Activated CD4-positive, alpha-beta T cell treated with anti-CD3 and anti-CD28 coated beads for 36 hours (primary cell): ENCODE measurements at regions of chr20 and their contacts with region 1.

Region 1: GRCh38 chr20:21702553-21703470 is 2.7 kb upstream of the PAX1 start:
- DNase-seq: peak; percentile 80
- ATAC-seq: peak; percentile 55
- H3K4me3 Mint-ChIP-seq: no peak overlapping the region
- H3K27ac Mint-ChIP-seq: no peak overlapping the region
- H3K4me1 Mint-ChIP-seq: no peaks in the 10 kb centered on the region
- H3K27me3 Mint-ChIP-seq: peaks cover 78% of the 10 kb centered on the region

Region 2: DNA sequence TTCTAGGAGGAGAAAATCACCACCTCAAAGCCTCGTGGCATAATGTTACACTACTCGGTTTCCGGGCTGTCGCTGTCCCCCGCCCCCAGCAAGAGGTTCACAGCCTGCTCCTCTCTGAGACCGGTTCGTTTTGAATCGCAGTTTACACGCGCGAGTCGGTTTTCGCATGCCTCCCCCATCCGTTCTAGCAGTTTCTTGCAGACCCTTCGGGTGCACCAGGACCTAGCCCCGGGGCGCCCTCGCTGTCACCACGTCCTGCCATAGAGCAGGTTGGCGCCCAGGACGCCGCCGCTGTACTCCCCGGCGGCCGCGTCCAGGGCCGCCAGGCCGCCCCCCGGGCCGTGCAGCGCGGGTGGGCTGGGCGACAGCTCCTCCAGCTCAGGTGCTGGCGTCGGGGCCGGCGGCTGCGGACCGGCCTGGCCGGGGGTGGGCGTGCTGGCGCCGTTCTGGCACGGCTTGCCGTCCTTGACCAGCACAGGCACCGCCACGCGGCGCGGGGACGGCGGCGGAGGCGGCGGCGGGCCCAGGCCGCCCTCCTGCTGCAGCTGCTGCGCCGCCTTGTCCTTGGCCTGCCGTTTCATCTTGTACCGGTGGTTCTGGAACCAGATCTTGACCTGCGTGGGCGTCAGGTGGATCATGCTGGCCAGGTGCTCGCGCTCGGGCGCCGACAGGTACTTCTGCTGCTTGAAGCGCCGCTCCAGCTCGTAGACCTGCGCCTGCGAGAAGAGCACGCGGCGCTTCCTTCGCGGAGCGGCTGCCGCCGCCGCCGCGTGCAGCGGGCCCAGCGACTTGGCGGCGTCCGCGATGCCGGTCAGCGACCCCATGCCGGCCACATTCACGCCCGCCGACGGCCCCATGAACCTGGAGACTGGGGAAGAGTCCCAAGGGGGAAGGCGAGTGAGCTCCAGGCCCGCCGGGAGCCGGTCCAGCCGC is 306.9 kb before region 1 on chr20:
- CTCF ChIA-PET with region 1: no interaction called
- POLR2A ChIA-PET with region 1: no interaction called
- intact Hi-C with region 1: loop called (anchors 5 kb)
- DNase-seq: peak; percentile 67
- ATAC-seq: peak; percentile 76
- H3K4me3 Mint-ChIP-seq: peak overlapping the region; percentile 40
- H3K27ac Mint-ChIP-seq: no peak overlapping the region
- H3K4me1 Mint-ChIP-seq: peaks cover 24% of the 10 kb centered on the region
- H3K27me3 Mint-ChIP-seq: peaks cover 62% of the 10 kb centered on the region

Region 3: GRCh38 chr20:21520702-21521595 is 181.9 kb before region 1 on chr20:
- CTCF ChIA-PET with region 1: no interaction called
- POLR2A ChIA-PET with region 1: no interaction called
- intact Hi-C with region 1: loop called (anchors 2 kb)
- DNase-seq: peak; percentile 23
- ATAC-seq: no peak
- H3K4me3 Mint-ChIP-seq: no peak overlapping the region
- H3K27ac Mint-ChIP-seq: no peak overlapping the region
- H3K4me1 Mint-ChIP-seq: peaks cover 26% of the 10 kb centered on the region
- H3K27me3 Mint-ChIP-seq: peaks cover 86% of the 10 kb centered on the region

Region 4: GRCh38 chr20:21719592-21720214 is 16.9 kb after region 1 on chr20:
- CTCF ChIA-PET with region 1: interaction called, 12 read pairs
- POLR2A ChIA-PET with region 1: no interaction called
- intact Hi-C with region 1: no loop called
- DNase-seq: peak; percentile 70
- ATAC-seq: no peak
- H3K4me3 Mint-ChIP-seq: no peak overlapping the region
- H3K27ac Mint-ChIP-seq: no peak overlapping the region
- H3K4me1 Mint-ChIP-seq: no peaks in the 10 kb centered on the region
- H3K27me3 Mint-ChIP-seq: peaks cover 36% of the 10 kb centered on the region

Region 5: DNA sequence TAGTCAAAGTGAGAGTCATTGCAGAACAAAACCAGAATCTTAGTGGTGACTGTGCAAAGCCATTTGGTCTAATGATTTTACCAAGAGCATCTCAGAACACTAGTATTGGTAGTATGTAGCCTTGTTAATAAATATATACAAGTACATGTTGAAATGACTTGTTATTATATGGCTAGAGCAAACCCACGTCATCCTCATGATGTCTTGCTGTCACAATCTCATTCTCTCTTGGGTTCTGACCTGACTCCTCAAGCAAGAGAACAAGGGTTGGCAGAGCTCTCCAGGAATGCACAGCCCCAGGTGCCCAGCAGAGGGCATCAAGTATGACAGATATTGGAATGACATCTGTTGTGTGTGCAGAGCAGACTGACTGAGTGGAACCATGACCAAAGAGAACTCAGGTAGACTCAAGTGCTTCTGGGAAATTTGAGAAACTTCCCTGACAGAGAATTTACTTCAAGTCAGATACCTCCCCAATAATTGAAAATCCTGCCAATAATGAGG is 93.2 kb after region 1 on chr20:
- CTCF ChIA-PET with region 1: no interaction called
- POLR2A ChIA-PET with region 1: no interaction called
- intact Hi-C with region 1: no loop called
- DNase-seq: peak; percentile 10
- ATAC-seq: no peak
- H3K4me3 Mint-ChIP-seq: no peak overlapping the region
- H3K27ac Mint-ChIP-seq: no peak overlapping the region
- H3K4me1 Mint-ChIP-seq: no peaks in the 10 kb centered on the region
- H3K27me3 Mint-ChIP-seq: peaks cover 3% of the 10 kb centered on the region

Region 6: GRCh38 chr20:22575087-22575721 is 872.4 kb after region 1 on chr20:
- CTCF ChIA-PET with region 1: no interaction called
- POLR2A ChIA-PET with region 1: no interaction called
- intact Hi-C with region 1: loop called (anchors 5 to 10 kb)
- DNase-seq: no peak
- ATAC-seq: no peak
- H3K4me3 Mint-ChIP-seq: no peak overlapping the region
- H3K27ac Mint-ChIP-seq: no peak overlapping the region
- H3K4me1 Mint-ChIP-seq: no peaks in the 10 kb centered on the region
- H3K27me3 Mint-ChIP-seq: peaks cover 69% of the 10 kb centered on the region

Region 7: GRCh38 chr20:23050847-23051631 is 1348.2 kb after region 1 on chr20:
- CTCF ChIA-PET with region 1: no interaction called
- POLR2A ChIA-PET with region 1: no interaction called
- intact Hi-C with region 1: loop called in 1 of 2 experiments (anchors 10 kb)
- DNase-seq: peak; percentile 78
- ATAC-seq: peak; percentile 49
- H3K4me3 Mint-ChIP-seq: no peak overlapping the region
- H3K27ac Mint-ChIP-seq: no peak overlapping the region
- H3K4me1 Mint-ChIP-seq: peaks cover 5% of the 10 kb centered on the region
- H3K27me3 Mint-ChIP-seq: peaks cover 52% of the 10 kb centered on the region